ENCODE measurements at regions of chr7 and their contacts with region 1.

Region 1: GRCh38 chr7:46776790-46777189 is 805.1 kb downstream of the TNS3 start:
- DNase-seq: no peak
- H3K4me3 ChIP-seq: no peak overlapping the region
- H3K4me3 Mint-ChIP-seq: no peak overlapping the region
- H3K27ac Mint-ChIP-seq: no peak overlapping the region
- H3K4me1 ChIP-seq: no peaks in the 10 kb centered on the region
- H3K4me1 Mint-ChIP-seq: no peaks in the 10 kb centered on the region
- H3K27me3 ChIP-seq: no peaks in the 10 kb centered on the region
- H3K27me3 Mint-ChIP-seq: peaks cover 7% of the 10 kb centered on the region
- CTCF ChIP-seq: peak; percentile 36 to 40

Region 2: DNA sequence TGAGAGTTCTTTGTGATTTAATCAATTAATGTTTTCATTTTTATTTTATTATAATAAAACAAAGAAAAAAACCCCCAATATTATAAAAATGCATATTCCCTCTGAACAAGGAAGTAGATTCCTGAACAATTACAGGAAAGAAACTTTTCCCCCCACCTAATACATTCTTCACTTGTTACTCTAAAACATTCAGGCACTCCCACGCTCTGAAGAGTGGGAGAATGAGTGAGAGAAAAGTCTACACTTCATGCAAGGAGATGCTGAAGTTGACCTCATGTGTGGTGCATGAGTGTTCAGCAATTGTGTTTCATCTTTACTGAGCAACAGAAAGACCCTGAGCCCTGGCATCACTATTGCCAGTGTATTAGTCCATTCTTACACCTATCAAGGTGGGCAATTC is 611.5 kb before region 1 on chr7:
- CTCF ChIA-PET with region 1: no interaction called
- POLR2A ChIA-PET with region 1: no interaction called
- intact Hi-C with region 1: loop called (anchors 5 kb)
- DNase-seq: no peak
- H3K4me3 ChIP-seq: no peak overlapping the region
- H3K4me3 Mint-ChIP-seq: no peak overlapping the region
- H3K27ac Mint-ChIP-seq: no peak overlapping the region
- H3K4me1 ChIP-seq: no peaks in the 10 kb centered on the region
- H3K4me1 Mint-ChIP-seq: no peaks in the 10 kb centered on the region
- H3K27me3 ChIP-seq: no peaks in the 10 kb centered on the region
- H3K27me3 Mint-ChIP-seq: peaks cover 6% of the 10 kb centered on the region
- CTCF ChIP-seq: no peak

Region 3: DNA sequence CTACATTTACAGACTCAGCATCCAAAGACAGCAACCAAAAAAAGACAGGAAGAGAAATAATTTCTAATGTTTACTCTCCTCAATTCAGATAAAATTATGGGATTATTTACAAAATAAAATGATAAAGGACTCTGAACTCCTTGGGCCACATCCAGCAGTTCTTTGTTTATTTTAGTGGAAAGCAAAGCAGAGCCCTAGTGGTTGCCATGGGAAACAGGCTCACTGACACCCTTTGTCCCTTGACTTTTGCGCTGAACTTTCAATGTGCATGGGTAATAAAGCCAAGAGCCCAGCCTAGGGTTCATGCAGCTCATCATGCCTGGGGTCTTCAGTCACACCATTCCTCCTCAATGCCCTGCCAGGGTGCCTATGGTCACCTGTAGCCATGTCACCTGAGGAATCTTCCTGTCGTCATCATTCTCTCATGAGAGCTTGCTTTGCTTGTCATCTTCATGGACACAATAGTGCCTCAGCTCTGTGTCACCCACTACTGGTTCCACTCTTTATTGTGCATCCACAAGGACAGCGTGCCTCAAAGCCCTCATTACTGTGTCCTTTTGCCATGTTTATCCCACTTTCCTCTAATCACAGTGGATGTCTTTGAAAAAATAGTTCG is 413.0 kb before region 1 on chr7:
- CTCF ChIA-PET with region 1: no interaction called
- POLR2A ChIA-PET with region 1: no interaction called
- intact Hi-C with region 1: no loop called
- DNase-seq: peak in 1 of 2 experiments; percentile 6
- H3K4me3 ChIP-seq: no peak overlapping the region
- H3K4me3 Mint-ChIP-seq: no peak overlapping the region
- H3K27ac Mint-ChIP-seq: no peak overlapping the region
- H3K4me1 ChIP-seq: no peaks in the 10 kb centered on the region
- H3K4me1 Mint-ChIP-seq: no peaks in the 10 kb centered on the region
- H3K27me3 ChIP-seq: no peaks in the 10 kb centered on the region
- H3K27me3 Mint-ChIP-seq: peaks cover 3% of the 10 kb centered on the region
- CTCF ChIP-seq: no peak

Region 4: DNA sequence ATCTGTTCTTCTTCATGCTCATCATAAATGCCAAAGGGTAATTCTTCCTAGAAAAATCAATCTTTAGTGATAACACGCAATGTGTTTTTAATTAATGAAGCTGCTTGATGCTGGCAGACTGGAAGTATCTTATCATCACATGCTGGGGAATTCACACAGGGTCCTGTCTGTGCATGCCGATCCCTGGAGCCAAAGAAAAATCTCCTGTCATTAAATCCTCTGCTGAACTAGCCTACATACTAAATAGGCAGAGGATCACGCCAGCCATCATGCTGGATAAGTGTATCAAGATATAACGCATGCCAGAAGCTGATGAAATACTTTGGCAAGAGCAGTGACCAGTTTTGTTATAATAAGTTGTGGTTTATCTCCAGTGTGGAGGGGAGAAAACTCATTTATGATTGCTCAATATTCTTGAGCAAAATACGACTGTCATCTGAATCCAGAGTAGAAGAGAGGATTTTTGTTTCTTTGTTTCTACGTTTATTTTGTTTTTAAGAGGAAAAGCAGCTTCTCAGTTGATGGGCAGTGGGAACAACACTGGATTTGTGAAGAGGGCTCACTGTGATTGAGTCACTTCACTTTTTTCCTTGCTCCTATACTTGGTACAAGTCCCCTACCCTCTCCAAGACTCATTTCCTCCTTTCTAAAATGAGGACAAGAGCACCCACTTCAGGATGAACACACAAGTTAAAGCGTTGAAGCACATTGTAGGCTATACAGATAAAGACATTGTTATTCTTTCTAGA is 156.1 kb after region 1 on chr7:
- CTCF ChIA-PET with region 1: no interaction called
- POLR2A ChIA-PET with region 1: no interaction called
- intact Hi-C with region 1: loop called (anchors 5 kb)
- DNase-seq: no peak
- H3K4me3 ChIP-seq: no peak overlapping the region
- H3K4me3 Mint-ChIP-seq: no peak overlapping the region
- H3K27ac Mint-ChIP-seq: no peak overlapping the region
- H3K4me1 ChIP-seq: no peaks in the 10 kb centered on the region
- H3K4me1 Mint-ChIP-seq: no peaks in the 10 kb centered on the region
- H3K27me3 ChIP-seq: no peaks in the 10 kb centered on the region
- H3K27me3 Mint-ChIP-seq: peaks cover 4% of the 10 kb centered on the region
- CTCF ChIP-seq: no peak